ENCODE measurements at regions of chr19 and their contacts with region 1.

Region 1: DNA sequence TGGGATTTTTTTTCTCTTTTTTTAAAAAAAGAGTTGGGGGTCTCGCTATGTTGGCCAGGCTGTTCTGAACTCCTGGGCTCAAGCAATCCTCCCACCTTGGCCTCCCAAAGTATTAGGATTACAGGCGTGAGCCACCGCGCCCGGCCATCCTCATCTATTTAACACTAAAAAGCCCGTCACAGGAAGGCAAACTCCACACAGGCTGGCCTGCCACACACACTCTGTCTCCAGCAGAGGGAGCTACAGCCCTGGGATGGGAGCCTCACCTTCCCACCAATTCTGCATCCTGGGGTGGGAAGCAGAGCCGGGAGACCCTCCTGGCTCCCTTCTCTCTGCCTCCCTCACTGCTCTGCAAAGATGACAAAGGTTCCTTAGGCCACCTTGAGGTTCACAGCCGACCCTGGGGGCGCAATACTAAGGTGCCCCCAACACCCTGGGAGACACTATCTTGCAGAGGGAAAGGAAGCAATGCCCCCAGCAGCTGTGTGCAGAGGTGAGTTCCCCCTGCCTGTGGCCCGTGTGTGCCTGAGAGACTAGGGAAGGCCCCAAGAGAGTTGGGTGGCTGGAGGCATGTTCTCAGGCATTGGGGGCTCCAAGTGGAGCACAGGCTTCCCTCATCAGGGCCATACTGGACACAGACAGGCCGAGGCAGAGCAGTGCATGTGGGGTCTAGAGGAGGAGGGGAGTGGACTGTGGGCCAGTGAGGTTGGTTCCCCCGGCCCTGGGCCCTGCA is 27.4 kb upstream of the TIMM44 start:
- DNase-seq: peak; percentile 27
- H3K4me3 ChIP-seq: no peak overlapping the region
- H3K27ac ChIP-seq: no peak overlapping the region
- H3K4me1 ChIP-seq: no peaks in the 10 kb centered on the region
- H3K27me3 ChIP-seq: no peaks in the 10 kb centered on the region
- CTCF ChIP-seq: peak; percentile 67 to 88
- POLR2A ChIP-seq: no peak

Region 2: GRCh38 chr19:8005534-8006256 is 34.8 kb after region 1 on chr19 and contains the start of gene ELAVL1:
- CTCF ChIA-PET with region 1: interaction called, 25 read pairs
- POLR2A ChIA-PET with region 1: no interaction called
- dilution Hi-C with region 1: no loop called
- intact Hi-C with region 1: loop called (anchors 1 kb)
- DNase-seq: peak; percentile 88
- H3K4me3 ChIP-seq: peak within 1 kb of the TSS; percentile 81 to 96 (median 84)
- H3K27ac ChIP-seq: peak within 1 kb of the TSS; percentile 53
- H3K4me1 ChIP-seq: peaks cover 22% of the 10 kb centered on the region
- H3K27me3 ChIP-seq: no peaks in the 10 kb centered on the region
- CTCF ChIP-seq: no peak
- POLR2A ChIP-seq: peak; percentile 67
- total RNA-seq, gene ELAVL1: 124 and 134 TPM in 2 replicates

Region 3: GRCh38 chr19:8158411-8159074 is 187.7 kb after region 1 on chr19:
- CTCF ChIA-PET with region 1: interaction called, 8 read pairs
- POLR2A ChIA-PET with region 1: no interaction called
- dilution Hi-C with region 1: no loop called
- intact Hi-C with region 1: loop called (anchors 2 kb)
- DNase-seq: peak; percentile 59
- H3K4me3 ChIP-seq: no peak overlapping the region
- H3K27ac ChIP-seq: no peak overlapping the region
- H3K4me1 ChIP-seq: peaks cover 3% of the 10 kb centered on the region
- H3K27me3 ChIP-seq: no peaks in the 10 kb centered on the region
- CTCF ChIP-seq: peak; percentile 45 to 62
- POLR2A ChIP-seq: no peak

Measured in endothelial cell of umbilical vein (primary cell).